Dorsolateral prefrontal cortex (tissue), 120 donors: ENCODE measurements at regions of chr17 and their contacts with region 1.

Region 1: DNA sequence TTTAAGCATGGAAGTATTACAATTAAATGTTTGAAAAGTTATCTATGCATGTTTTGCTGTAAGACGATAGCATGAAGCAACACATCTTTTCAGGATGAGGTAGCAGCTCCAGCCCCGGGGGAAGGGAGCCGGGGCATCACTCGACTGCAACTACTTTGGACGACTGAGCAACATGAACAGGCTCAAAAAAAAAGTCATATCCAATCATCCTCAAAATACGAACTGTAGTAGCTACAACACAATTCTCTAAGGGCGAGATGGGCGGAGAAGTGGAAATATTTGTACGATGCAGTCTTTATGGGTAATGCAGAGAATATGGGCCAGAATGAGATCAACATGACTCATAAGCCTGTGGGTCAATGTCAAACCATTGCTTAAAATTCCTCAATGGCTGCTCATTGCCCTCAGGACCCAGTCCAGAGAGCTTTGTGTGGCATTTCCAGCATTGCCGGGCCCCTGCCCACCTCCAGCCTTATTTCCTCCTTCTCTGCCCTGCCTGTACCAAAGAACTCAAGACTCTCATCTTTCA is 17.6 kb upstream of the SMURF2 start:
- DNase-seq: no peak
- H3K4me3 ChIP-seq: no peak overlapping the region
- H3K27ac ChIP-seq: no peak overlapping the region
- H3K27me3 ChIP-seq: no peaks in the 10 kb centered on the region
- CTCF ChIP-seq: no peak

Region 2: GRCh38 chr17:64950871-64951270 is 271.1 kb after region 1 on chr17:
- intact Hi-C with region 1: loop called in 1 of 2 experiments (anchors 10 kb)
- DNase-seq: no peak
- H3K4me3 ChIP-seq: no peak overlapping the region
- H3K27ac ChIP-seq: no peak overlapping the region
- H3K27me3 ChIP-seq: no peaks in the 10 kb centered on the region
- CTCF ChIP-seq: no peak

Region 3: DNA sequence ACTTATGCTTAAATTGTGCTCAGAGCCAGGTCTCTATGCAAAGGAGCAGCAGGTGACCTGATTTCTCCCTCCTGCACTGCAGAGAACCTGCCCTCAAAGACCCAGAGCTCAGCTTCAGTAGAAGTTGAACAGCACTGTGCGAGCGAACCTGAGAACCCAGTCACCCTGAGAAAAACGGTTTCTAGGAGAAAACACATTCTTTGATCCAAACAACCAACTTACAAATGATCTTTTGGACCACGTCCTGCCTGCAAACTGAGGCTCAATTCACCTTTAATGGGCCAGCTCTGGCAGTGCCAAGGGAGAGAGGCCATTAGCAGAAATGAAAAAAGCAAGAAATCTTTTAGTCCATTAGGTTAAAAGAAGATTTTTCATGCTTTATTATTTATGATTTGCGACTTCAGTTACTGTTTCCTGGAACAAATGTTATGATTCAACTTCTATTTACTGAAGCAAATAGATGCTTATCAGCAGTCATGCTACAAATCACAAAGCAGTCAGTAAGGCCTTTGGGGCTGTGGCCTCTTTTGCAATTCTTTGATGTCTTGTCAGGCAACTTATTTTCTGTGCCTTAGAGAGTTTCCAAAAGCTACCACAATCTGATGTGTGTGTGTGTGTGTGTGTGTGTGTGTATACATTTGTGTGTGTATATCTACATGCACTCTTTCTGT is 305.2 kb after region 1 on chr17:
- intact Hi-C with region 1: no loop called
- DNase-seq: no peak
- H3K4me3 ChIP-seq: no peak overlapping the region
- H3K27ac ChIP-seq: peak overlapping the region in 48 of 59 donors; percentile 12 to 93 (median 81)
- H3K27me3 ChIP-seq: no peaks in the 10 kb centered on the region
- CTCF ChIP-seq: no peak